Aorta (tissue), 5 donors: ENCODE measurements at regions of chr10 and their contacts with region 1.

Region 1: DNA sequence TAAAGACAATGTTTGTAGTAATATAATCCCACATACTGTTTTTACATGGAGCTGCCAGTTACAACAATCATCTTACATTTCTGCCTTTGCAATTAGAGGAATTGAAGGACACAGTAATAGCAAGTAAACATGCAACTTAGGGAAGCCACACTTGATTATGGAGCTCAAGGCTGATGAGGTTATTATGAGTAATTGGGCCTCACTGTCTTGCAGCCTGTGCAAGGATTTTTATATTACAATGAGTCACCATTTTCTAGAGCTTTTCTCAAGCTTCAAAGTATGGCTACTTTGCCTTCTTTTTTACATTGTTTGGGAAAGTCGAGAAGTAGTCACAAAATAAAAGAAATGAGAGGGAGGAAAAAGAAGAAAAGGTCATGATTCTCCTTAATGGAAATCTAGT is 226.4 kb downstream of the KIAA1217 start:
- DNase-seq: no peak
- ATAC-seq: no peak
- H3K4me3 ChIP-seq: no peak overlapping the region
- H3K27ac ChIP-seq: no peak overlapping the region
- H3K4me1 ChIP-seq: peaks cover 0 to 6% of the 10 kb centered on the region in 2 donors
- H3K27me3 ChIP-seq: no peaks in the 10 kb centered on the region

Region 2: DNA sequence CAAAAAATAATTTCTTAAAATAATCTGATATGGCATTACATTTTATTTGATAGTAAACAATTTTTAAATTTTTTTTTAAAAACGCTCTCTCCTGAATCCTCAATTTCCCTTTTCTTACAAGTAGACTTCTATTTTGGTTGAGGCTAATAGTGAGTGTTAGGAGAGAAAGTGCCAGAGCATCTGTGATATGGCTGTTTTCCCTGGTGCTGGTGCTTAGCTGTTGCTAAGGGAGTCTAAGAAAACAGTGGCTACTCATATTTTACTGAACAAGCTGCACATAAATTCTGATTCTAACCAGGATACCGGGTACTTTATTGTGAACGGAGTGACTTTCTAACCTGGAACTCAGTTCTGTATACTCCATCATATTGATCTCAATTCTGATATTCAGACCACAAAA is 537.5 kb before region 1 on chr10:
- intact Hi-C with region 1: no loop called
- DNase-seq: no peak
- ATAC-seq: no peak
- H3K4me3 ChIP-seq: no peak overlapping the region
- H3K27ac ChIP-seq: no peak overlapping the region
- H3K4me1 ChIP-seq: no peaks in the 10 kb centered on the region
- H3K27me3 ChIP-seq: no peaks in the 10 kb centered on the region

Region 3: GRCh38 chr10:24344279-24344678 is 91.1 kb before region 1 on chr10:
- intact Hi-C with region 1: no loop called
- DNase-seq: no peak
- ATAC-seq: no peak
- H3K4me3 ChIP-seq: peak overlapping the region in 1 of 2 donors; percentile 54
- H3K27ac ChIP-seq: peak overlapping the region; percentile 35 to 87
- H3K4me1 ChIP-seq: peaks cover 0 to 4% of the 10 kb centered on the region in 2 donors
- H3K27me3 ChIP-seq: no peaks in the 10 kb centered on the region

Region 4: DNA sequence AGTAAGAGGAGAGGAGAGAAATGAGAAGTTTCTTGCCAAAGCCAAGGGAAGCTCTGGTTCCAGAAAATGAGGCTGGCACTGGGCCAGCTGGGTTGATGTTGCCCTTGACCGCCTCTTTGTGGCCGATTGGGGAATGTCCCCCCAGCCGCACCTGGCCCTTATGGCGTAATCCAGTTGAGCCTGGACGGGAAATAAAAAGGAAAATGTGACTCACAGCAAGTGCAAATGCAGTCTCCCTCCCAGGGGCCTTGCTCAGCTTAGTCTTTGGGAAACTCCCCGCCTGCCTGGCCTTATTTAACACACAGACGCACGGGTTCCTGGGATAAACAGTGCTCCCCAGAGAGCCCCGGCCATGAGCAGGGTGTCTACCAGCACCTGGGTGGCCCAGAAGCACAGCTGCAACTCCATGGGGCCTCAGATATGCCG is 51.7 kb before region 1 on chr10:
- intact Hi-C with region 1: loop called in 1 of 2 experiments (anchors 5 kb)
- DNase-seq: peak; percentile 90 to 93
- ATAC-seq: peak; percentile 94
- H3K4me3 ChIP-seq: no peak overlapping the region
- H3K27ac ChIP-seq: peak overlapping the region in 1 of 2 donors; percentile 8
- H3K4me1 ChIP-seq: peaks cover 0 to 3% of the 10 kb centered on the region in 2 donors
- H3K27me3 ChIP-seq: no peaks in the 10 kb centered on the region

Region 5: DNA sequence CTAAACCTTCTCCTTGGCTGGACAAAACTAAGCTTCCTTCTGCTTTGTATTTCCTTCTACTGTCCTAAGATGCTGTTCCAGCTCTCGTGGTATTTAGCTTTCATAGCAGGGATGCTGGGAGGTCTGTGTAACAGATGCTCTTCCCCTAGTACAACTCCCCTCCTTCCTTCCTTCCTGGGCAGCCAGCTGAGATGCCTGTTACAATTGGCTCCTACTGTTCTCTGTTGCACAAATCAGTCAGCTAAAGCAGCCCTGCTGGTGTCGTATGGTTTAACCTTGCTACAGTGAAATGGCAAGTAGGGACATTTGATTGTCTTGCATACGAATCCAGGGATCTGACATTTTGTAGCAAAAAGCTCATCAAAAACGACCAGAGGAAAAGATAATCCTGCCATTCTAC is 144.5 kb after region 1 on chr10:
- intact Hi-C with region 1: no loop called
- DNase-seq: no peak
- ATAC-seq: no peak
- H3K4me3 ChIP-seq: no peak overlapping the region
- H3K27ac ChIP-seq: no peak overlapping the region
- H3K4me1 ChIP-seq: no peaks in the 10 kb centered on the region
- H3K27me3 ChIP-seq: no peaks in the 10 kb centered on the region